Vagina (tissue), 2 donors: ENCODE measurements at regions of chr21 and their contacts with region 1.

Region 1: DNA sequence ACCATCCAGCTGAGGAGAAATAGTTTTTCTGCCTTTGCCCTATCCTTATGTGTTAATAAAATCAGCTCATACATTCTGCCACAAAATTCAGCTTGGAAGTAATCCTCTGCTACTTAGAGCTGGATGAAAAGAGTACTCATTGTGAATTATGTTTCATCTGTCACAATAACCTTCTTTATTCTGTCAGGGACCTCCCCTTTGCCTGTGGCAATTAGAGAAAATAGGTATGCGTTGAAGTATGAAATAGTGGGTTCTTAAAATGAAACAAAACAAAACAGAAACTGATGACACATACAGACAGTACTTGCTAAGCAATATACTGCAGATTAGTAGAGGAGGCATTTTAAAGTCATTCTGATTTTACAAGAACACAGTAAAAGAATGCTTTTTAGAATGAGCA is 578.5 kb downstream of the USP25 start:
- DNase-seq: no peak
- H3K4me3 ChIP-seq: peak overlapping the region; percentile 30
- H3K27ac ChIP-seq: peak overlapping the region; percentile 87
- H3K4me1 ChIP-seq: peaks cover 22% of the 10 kb centered on the region
- H3K27me3 ChIP-seq: no peaks in the 10 kb centered on the region
- CTCF ChIP-seq: no peak
- POLR2A ChIP-seq: no peak

Region 2: GRCh38 chr21:16082038-16082816 is 226.0 kb before region 1 on chr21:
- intact Hi-C with region 1: loop called (anchors 10 kb)
- DNase-seq: no peak
- H3K4me3 ChIP-seq: no peak overlapping the region
- H3K27ac ChIP-seq: peak overlapping the region; percentile 60
- H3K4me1 ChIP-seq: peaks cover 11% of the 10 kb centered on the region
- H3K27me3 ChIP-seq: no peaks in the 10 kb centered on the region
- CTCF ChIP-seq: peak in 1 of 3 experiments; percentile 39
- POLR2A ChIP-seq: no peak

Region 3: DNA sequence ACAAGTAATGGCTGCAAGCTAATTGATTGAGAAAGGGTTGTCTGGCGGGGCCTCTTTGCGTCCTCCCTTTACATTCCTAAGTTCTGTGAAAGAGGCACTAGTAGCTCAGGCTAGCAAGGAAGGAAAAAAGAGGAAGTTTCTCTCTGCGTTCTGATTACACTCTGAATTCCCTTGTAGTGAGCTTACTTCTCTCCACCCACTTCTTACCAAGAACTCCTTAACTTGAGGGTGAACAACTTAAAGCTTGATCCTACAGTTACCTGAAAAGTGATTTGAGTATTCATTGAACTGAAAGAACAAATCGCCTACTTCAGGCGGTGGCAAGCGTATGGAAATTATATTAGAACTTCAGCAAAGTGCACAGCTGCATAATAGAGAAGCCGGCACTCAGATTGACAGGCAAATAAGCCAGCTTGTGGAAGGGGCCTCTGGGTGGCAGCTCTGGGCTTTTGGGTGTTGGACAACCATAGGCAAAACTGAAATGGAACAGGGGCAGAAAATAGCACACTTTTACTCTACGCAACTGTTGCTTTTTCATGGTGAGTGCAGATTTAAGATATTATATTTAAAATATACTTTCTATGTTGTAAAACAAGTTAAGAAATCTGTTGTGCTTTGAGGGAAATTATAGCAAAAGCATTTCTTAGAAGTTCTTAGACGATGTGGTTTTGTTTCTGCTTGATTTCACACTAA is 114.0 kb before region 1 on chr21:
- intact Hi-C with region 1: loop called (anchors 10 kb)
- DNase-seq: peak in 1 of 2 donors; percentile 93
- H3K4me3 ChIP-seq: peak overlapping the region; percentile 43 to 51
- H3K27ac ChIP-seq: peak overlapping the region; percentile 90
- H3K4me1 ChIP-seq: peaks cover 12% of the 10 kb centered on the region
- H3K27me3 ChIP-seq: no peaks in the 10 kb centered on the region
- CTCF ChIP-seq: peak in 1 of 3 experiments; percentile 10
- POLR2A ChIP-seq: peak in 1 of 2 donors; percentile 13

Region 4: DNA sequence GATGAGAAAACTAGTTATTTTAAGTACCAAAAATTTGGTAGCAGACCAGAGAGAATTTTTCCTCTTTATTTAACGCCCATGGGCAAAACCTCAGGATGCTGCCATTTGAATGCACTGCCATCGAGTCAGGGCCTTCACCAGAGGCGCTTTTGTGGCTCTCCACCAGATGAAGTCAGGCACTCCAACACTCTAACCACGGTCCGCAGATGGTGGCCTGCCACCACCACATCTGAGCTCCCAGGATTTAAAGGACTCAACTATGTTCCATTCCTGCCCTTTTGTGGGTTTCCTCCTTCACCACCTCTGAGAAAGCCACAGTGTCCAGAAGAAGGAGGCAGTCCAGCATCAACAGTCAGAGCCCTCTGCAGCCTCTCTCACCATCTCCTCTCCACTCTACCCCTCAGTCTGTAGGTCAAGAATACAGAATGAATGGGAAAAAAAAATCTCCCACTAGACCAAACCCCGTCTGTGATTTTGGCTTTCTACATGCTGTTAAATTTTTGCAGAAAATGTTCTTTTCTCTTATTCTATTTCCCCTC is 68.9 kb after region 1 on chr21:
- intact Hi-C with region 1: no loop called
- DNase-seq: no peak
- H3K4me3 ChIP-seq: no peak overlapping the region
- H3K27ac ChIP-seq: no peak overlapping the region
- H3K4me1 ChIP-seq: peaks cover 25% of the 10 kb centered on the region
- H3K27me3 ChIP-seq: no peaks in the 10 kb centered on the region
- CTCF ChIP-seq: no peak
- POLR2A ChIP-seq: no peak

Region 5: DNA sequence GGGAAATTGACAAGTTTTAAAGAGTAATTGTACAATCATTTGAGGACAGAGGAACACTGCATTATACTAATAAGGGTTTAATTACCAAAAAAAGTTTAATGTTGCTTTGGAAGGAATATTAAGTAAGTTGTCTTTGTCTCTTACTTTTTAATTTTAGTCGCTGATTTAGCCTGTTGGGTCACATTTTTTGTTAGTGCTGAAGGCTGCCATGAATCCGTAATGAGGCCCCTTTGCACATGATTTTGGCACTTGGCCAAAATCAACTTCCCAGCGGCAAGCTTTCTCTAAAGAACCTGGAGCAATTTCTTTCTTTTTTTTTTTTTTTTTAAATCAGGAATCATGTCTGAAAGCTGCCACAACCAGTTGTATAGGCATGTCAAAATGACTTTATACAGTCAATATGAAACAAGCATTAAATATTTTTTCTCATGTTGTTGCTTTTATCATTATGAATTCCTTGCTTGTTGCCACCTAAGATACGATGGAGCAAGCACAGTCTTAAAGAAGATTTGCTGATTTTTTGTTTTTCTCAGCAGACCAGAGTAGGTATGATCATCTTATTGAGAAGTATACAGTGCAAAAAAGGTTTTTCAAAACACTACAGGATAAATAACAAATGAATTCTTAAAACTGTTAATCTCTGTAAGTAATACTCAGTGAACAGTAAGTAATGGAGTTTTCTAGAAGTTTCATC is 111.9 kb after region 1 on chr21:
- intact Hi-C with region 1: loop called (anchors 10 kb)
- DNase-seq: no peak
- H3K4me3 ChIP-seq: peak overlapping the region; percentile 46 to 49
- H3K27ac ChIP-seq: peak overlapping the region; percentile 85
- H3K4me1 ChIP-seq: peaks cover 14% of the 10 kb centered on the region
- H3K27me3 ChIP-seq: no peaks in the 10 kb centered on the region
- CTCF ChIP-seq: no peak
- POLR2A ChIP-seq: no peak